ENCODE measurements at regions of chr3 and their contacts with region 1.

Region 1: GRCh38 chr3:128969993-128970739 is 23.7 kb downstream of the CFAP92 start:
- DNase-seq: peak; percentile 28
- ATAC-seq: peak; percentile 50
- H3K4me3 Mint-ChIP-seq: no peak overlapping the region
- H3K27ac Mint-ChIP-seq: no peak overlapping the region
- H3K4me1 Mint-ChIP-seq: peaks cover 15% of the 10 kb centered on the region
- H3K27me3 Mint-ChIP-seq: no peaks in the 10 kb centered on the region
- CTCF ChIP-seq: peak; percentile 70

Region 2: DNA sequence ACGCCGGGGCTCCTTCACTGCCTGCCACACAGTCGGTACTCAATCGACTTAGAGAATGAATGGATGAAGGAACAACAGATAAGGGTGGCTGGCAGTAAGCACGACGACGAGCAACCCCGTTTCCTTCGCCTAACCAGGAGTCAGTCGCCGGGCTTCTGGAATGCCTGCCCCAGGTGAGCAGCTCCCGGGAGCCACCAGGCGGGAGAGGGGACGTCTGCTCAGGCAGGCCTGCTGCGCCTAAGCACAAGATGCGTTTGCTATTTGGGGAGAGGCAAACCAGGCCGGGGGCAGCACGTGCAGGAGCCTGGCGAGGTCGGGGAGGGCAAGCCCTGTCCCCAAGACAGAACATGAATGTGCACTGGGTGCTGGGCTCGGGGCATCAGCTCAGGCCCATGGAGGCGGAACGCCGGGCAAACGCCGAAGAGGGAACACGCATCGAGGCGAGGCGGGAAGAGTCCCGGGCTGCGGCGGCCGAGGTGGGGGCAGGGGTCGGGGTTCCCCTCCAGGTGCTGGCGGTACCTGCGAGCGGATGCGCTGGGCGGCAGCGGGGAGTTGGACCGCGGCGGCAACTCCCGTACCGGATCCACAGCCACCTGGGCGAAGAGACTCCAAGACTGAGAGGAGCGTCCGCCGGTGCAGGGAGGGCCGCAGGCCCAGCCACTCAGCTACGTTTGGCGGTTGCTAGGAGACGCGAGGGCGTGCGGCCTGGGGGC is 23.5 kb after region 1 on chr3 and contains the start of gene CFAP92:
- CTCF ChIA-PET with region 1: interaction called, 22 read pairs
- POLR2A ChIA-PET with region 1: interaction called, 3 read pairs
- intact Hi-C with region 1: no loop called
- DNase-seq: peak; percentile 88
- ATAC-seq: peak; percentile 98
- H3K4me3 Mint-ChIP-seq: peak within 1 kb of the TSS; percentile 60
- H3K27ac Mint-ChIP-seq: peak within 1 kb of the TSS; percentile 41
- H3K4me1 Mint-ChIP-seq: peaks cover 28% of the 10 kb centered on the region
- H3K27me3 Mint-ChIP-seq: peaks cover 15% of the 10 kb centered on the region
- CTCF ChIP-seq: no peak
- total RNA-seq, gene CFAP92: not detected in 2 replicates

Region 3: GRCh38 chr3:129026728-129027543 is 56.8 kb after region 1 on chr3:
- CTCF ChIA-PET with region 1: interaction called, 18 read pairs
- POLR2A ChIA-PET with region 1: interaction called, 3 read pairs
- intact Hi-C with region 1: loop called (anchors 1 kb)
- DNase-seq: peak; percentile 83
- ATAC-seq: peak; percentile 97
- H3K4me3 Mint-ChIP-seq: peak overlapping the region; percentile 85
- H3K27ac Mint-ChIP-seq: peak overlapping the region; percentile 94
- H3K4me1 Mint-ChIP-seq: peaks cover 12% of the 10 kb centered on the region
- H3K27me3 Mint-ChIP-seq: no peaks in the 10 kb centered on the region
- CTCF ChIP-seq: no peak

Region 4: GRCh38 chr3:129183569-129184395 is 213.6 kb after region 1 on chr3 and contains the start of gene CNBP:
- CTCF ChIA-PET with region 1: interaction called, 3 read pairs
- POLR2A ChIA-PET with region 1: no interaction called
- intact Hi-C with region 1: loop called (anchors 5 kb)
- DNase-seq: peak; percentile 92
- ATAC-seq: peak; percentile 95
- H3K4me3 Mint-ChIP-seq: peak within 1 kb of the TSS; percentile 95
- H3K27ac Mint-ChIP-seq: peak within 1 kb of the TSS; percentile 95
- H3K4me1 Mint-ChIP-seq: peaks cover 50% of the 10 kb centered on the region
- H3K27me3 Mint-ChIP-seq: no peaks in the 10 kb centered on the region
- CTCF ChIP-seq: no peak
- total RNA-seq, gene CNBP: 281 and 303 TPM in 2 replicates

Region 5: DNA sequence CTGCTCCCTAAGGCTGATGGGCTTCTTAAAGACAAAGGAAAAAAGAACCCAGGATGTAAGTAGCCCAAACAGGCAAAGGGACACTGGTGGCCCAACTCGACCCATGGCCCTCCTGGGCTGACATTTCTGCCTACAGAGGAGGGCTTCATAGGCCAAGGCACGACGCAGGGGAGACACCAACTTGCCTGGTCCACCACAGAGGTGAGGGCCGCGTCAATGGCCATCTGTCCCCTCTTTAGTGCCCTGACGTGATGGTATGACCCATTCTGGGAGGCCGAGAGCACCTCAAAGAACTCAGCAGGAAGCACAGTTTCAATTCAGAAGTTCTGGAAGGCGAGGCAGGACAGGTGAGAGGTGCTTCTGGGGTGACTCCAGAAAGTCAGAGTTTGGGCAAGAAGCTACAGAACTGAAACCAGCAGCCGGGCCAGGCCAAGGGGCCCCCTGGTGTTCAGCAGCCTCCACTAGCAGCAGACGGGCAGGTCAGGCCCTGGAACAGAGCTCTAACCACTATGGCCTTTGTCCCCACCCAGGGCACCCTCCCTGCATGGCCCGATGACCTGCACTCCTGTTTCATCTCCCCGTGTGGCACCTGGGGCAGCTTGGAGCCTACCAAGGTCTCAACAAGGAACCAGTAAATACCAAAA is 353.6 kb after region 1 on chr3:
- CTCF ChIA-PET with region 1: interaction called, 19 read pairs
- POLR2A ChIA-PET with region 1: no interaction called
- intact Hi-C with region 1: no loop called
- DNase-seq: no peak
- ATAC-seq: peak; percentile 79
- H3K4me3 Mint-ChIP-seq: no peak overlapping the region
- H3K27ac Mint-ChIP-seq: no peak overlapping the region
- H3K4me1 Mint-ChIP-seq: peaks cover under 1% of the 10 kb centered on the region
- H3K27me3 Mint-ChIP-seq: peaks cover 6% of the 10 kb centered on the region
- CTCF ChIP-seq: no peak